GM12878 (cell line): ENCODE measurements at regions of chr20 and their contacts with region 1.

Region 1: GRCh38 chr20:16904750-16905149 is 156.6 kb downstream of the OTOR start:
- DNase-seq: no peak
- ATAC-seq: no peak
- H3K4me3 ChIP-seq: no peak overlapping the region
- H3K27ac ChIP-seq: no peak overlapping the region
- H3K4me1 ChIP-seq: no peaks in the 10 kb centered on the region
- H3K27me3 ChIP-seq: no peaks in the 10 kb centered on the region
- CTCF ChIP-seq: no peak; a peak in 1 of 6 replicates
- EP300 ChIP-seq: no peak
- POLR2A ChIP-seq: no peak
- RAD21 ChIP-seq: no peak

Region 2: DNA sequence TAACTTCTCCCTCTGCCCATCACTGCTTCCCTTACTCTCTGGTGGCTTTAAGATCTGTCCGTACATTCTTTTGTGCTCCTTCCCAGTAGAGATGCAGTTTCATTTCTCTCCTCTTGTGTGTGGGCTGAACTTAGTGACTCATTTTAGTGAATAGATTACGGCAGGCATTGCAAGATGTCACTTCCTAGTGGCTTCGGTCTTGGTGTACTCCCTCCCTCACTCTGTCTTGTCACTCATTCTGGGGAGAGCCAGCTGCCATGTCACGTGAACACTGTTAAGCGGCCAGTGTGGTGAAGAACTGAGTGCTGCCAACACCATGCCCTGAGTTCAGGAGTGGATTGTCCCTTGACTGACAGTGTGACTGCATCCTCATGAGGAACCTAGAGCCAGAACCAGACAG is 40.7 kb before region 1 on chr20:
- CTCF ChIA-PET with region 1: no interaction called
- POLR2A ChIA-PET with region 1: no interaction called
- RAD21 ChIA-PET with region 1: no interaction called
- SMC1A ChIA-PET with region 1: no interaction called
- in situ Hi-C with region 1: no loop called
- intact Hi-C with region 1: no loop called
- DNase-seq: peak; percentile 8
- ATAC-seq: peak; percentile 92
- H3K4me3 ChIP-seq: no peak overlapping the region
- H3K27ac ChIP-seq: no peak overlapping the region
- H3K4me1 ChIP-seq: no peaks in the 10 kb centered on the region
- H3K27me3 ChIP-seq: no peaks in the 10 kb centered on the region
- CTCF ChIP-seq: no peak
- EP300 ChIP-seq: no peak
- POLR2A ChIP-seq: no peak
- RAD21 ChIP-seq: no peak

Region 3: DNA sequence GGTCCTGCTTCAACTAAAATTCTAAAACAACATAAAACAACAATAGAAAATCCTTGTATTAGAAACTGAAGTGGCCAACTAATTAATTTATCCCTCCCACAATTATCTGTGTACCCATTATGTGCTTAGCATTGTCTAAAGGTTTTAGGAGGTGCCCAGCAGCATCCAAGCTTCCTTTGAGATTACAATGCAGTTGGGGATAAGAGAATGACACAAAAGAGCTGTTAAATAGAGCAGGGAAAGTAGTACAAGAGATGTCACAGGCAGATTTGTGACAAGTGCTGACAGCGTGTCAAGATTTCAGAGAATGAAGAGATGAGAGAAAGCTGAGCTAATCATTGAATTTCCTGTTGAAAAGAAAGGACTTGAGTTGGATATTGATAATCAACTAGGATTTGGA is 48.2 kb after region 1 on chr20:
- CTCF ChIA-PET with region 1: no interaction called
- POLR2A ChIA-PET with region 1: no interaction called
- RAD21 ChIA-PET with region 1: no interaction called
- SMC1A ChIA-PET with region 1: no interaction called
- in situ Hi-C with region 1: no loop called
- intact Hi-C with region 1: loop called (anchors 5 kb)
- DNase-seq: no peak
- ATAC-seq: no peak
- H3K4me3 ChIP-seq: no peak overlapping the region
- H3K27ac ChIP-seq: no peak overlapping the region
- H3K4me1 ChIP-seq: no peaks in the 10 kb centered on the region
- H3K27me3 ChIP-seq: no peaks in the 10 kb centered on the region
- CTCF ChIP-seq: no peak
- EP300 ChIP-seq: no peak
- POLR2A ChIP-seq: no peak
- RAD21 ChIP-seq: no peak

Region 4: DNA sequence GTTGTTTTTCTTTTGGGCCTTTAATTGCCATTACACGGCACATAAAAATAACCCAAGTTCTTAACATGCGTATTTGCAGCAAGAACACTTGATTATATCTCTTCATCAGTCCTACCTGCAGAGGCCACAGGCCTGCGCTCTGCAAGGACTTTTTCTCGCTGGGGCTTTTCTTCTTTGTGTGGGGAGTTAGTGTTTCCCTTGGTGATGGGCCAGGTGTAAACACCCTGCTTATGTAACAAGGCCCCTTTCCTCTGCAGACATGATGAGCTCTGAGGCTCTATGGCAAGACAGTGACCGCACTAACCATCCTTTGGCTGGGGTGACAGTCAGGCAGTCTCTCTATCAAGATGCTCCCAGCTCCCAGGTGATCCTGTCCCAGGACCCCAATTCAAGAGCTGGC is 224.3 kb after region 1 on chr20:
- CTCF ChIA-PET with region 1: no interaction called
- POLR2A ChIA-PET with region 1: no interaction called
- RAD21 ChIA-PET with region 1: no interaction called
- SMC1A ChIA-PET with region 1: no interaction called
- in situ Hi-C with region 1: no loop called
- intact Hi-C with region 1: no loop called
- DNase-seq: no peak
- ATAC-seq: no peak
- H3K4me3 ChIP-seq: no peak overlapping the region
- H3K27ac ChIP-seq: no peak overlapping the region
- H3K4me1 ChIP-seq: no peaks in the 10 kb centered on the region
- H3K27me3 ChIP-seq: no peaks in the 10 kb centered on the region
- CTCF ChIP-seq: no peak
- EP300 ChIP-seq: no peak
- POLR2A ChIP-seq: no peak
- RAD21 ChIP-seq: no peak